ENCODE measurements at regions of chr9 and their contacts with region 1.

Region 1: GRCh38 chr9:89549031-89549644 is 51.2 kb upstream of the SEMA4D start:
- DNase-seq: peak; percentile 85
- H3K4me3 Mint-ChIP-seq: no peak overlapping the region
- H3K27ac Mint-ChIP-seq: no peak overlapping the region
- H3K4me1 Mint-ChIP-seq: peaks cover 21% of the 10 kb centered on the region
- H3K27me3 Mint-ChIP-seq: peaks cover 24% of the 10 kb centered on the region

Region 2: GRCh38 chr9:89379508-89380115 is 169.5 kb before region 1 on chr9:
- CTCF ChIA-PET with region 1: interaction called, 11 read pairs
- POLR2A ChIA-PET with region 1: interaction called, 6 read pairs
- DNase-seq: no peak
- H3K4me3 Mint-ChIP-seq: no peak overlapping the region
- H3K27ac Mint-ChIP-seq: peak overlapping the region; percentile 29
- H3K4me1 Mint-ChIP-seq: peaks cover 68% of the 10 kb centered on the region
- H3K27me3 Mint-ChIP-seq: no peaks in the 10 kb centered on the region

Region 3: GRCh38 chr9:89428901-89429890 is 119.9 kb before region 1 on chr9:
- CTCF ChIA-PET with region 1: interaction called, 69 read pairs
- POLR2A ChIA-PET with region 1: interaction called, 14 read pairs
- DNase-seq: peak; percentile 63
- H3K4me3 Mint-ChIP-seq: no peak overlapping the region
- H3K27ac Mint-ChIP-seq: peak overlapping the region; percentile 97
- H3K4me1 Mint-ChIP-seq: peaks cover 89% of the 10 kb centered on the region
- H3K27me3 Mint-ChIP-seq: no peaks in the 10 kb centered on the region

Region 4: DNA sequence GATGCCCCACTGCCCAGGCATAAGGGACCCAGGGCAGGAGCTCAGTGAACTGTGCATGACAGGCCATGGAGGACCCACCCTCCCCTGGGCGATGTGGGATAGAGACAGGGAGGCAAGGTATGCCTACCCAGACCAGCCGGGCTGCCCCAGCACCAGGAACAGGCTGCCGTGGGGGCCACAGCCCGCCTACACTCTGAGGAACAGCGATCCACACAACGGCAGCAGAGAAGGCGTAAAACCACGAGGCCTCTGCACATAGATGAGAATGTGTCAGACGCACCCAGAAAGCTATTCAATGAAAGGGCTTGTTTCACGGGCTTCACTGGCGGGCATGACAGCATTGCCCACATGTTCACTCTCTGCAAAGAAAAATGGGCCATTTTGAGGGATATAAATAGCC is 100.8 kb before region 1 on chr9:
- CTCF ChIA-PET with region 1: interaction called, 27 read pairs
- POLR2A ChIA-PET with region 1: interaction called, 8 read pairs
- DNase-seq: no peak
- H3K4me3 Mint-ChIP-seq: no peak overlapping the region
- H3K27ac Mint-ChIP-seq: peak overlapping the region; percentile 62
- H3K4me1 Mint-ChIP-seq: peaks cover 90% of the 10 kb centered on the region
- H3K27me3 Mint-ChIP-seq: no peaks in the 10 kb centered on the region

Region 5: DNA sequence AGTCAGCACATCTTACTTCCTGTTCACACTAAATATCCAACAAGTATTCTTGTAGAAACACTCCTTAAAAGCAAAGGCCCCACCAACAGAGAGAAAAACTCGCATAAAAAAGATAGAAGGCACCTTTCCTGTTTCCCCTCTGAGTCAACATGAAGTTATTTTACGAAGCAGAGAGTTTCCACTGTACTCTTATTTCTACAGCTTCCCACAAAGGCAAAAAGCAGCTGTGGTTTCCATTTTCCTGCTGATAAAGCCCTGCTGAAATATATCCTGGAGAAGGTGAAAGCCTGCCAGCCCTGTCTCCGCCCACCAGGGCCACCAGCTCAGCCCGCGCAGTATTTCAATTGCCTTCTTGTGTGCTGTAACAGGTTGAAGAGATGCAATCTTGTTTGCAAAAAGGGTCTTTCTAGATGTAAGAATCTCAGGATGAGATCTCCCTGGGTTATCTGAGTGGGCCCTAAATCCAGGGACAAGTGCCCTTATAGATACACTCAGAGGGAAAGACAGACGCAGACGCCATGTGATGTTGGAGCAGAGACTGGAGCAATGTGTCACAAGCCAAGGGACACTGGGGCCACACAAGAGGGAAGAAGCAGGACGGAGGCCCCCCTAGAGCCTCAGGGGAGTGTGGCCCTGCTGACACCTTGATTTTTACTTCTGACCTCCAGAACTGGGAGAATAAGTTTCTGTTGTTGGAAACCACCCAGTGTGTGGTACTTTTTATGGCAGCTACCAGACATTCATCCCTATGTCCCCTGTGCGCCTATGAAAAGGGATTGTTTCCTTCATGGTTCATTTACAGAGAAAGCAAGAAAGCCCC is 71.1 kb before region 1 on chr9:
- CTCF ChIA-PET with region 1: interaction called, 31 read pairs
- POLR2A ChIA-PET with region 1: interaction called, 10 read pairs
- DNase-seq: peak; percentile 66
- H3K4me3 Mint-ChIP-seq: peak overlapping the region; percentile 60
- H3K27ac Mint-ChIP-seq: peak overlapping the region; percentile 87
- H3K4me1 Mint-ChIP-seq: peaks cover 88% of the 10 kb centered on the region
- H3K27me3 Mint-ChIP-seq: no peaks in the 10 kb centered on the region

Region 6: DNA sequence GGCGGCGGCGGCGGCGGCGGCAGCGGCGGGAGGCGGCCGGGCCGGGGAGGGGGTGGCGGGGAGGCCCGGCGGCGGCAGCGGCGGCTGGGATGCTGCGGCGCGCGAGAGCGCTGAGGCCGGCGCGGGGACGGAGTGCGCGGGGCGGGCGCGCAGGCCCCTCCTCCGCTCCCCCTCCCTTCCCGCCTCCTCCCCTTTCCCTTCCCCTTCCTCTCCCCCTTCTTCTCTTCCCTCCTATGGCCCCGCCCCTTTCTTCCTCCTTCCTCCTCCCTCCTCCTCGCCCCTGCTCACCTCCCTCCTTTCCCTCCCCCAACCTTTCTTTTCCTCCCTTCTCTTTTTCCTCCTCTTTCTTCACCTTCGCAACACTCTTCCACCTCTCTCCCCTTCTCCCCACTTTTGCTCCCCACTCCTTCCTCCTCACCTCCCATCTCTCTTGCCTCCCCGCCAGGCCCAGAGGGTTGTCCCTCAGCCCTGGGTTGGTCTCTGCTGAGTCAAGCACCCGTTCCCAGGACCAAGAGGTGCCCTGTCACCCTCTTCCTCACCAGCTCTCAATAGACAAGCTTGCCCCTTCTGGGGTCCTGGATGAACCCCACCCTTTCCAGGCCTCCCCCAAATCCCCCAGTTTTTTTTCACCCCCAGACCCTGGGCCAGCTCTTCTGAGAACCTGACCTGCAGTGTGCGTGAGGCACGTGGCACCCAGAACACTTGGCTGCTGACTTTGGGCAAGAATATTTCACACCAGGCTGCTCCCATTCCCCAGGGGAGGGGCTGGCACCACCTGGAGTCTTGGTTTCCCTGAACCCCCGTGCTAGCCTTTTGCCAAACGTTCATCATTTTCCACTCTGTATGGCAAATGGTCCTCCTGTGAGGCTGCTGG is 50.9 kb before region 1 on chr9 and contains the start of gene SEMA4D:
- CTCF ChIA-PET with region 1: interaction called, 33 read pairs
- POLR2A ChIA-PET with region 1: interaction called, 17 read pairs
- DNase-seq: peak; percentile 73
- H3K4me3 Mint-ChIP-seq: peak within 1 kb of the TSS; percentile 95
- H3K27ac Mint-ChIP-seq: peak within 1 kb of the TSS; percentile 96
- H3K4me1 Mint-ChIP-seq: peaks cover 83% of the 10 kb centered on the region
- H3K27me3 Mint-ChIP-seq: no peaks in the 10 kb centered on the region
- total RNA-seq, gene SEMA4D: 339 to 350 TPM

Region 7: DNA sequence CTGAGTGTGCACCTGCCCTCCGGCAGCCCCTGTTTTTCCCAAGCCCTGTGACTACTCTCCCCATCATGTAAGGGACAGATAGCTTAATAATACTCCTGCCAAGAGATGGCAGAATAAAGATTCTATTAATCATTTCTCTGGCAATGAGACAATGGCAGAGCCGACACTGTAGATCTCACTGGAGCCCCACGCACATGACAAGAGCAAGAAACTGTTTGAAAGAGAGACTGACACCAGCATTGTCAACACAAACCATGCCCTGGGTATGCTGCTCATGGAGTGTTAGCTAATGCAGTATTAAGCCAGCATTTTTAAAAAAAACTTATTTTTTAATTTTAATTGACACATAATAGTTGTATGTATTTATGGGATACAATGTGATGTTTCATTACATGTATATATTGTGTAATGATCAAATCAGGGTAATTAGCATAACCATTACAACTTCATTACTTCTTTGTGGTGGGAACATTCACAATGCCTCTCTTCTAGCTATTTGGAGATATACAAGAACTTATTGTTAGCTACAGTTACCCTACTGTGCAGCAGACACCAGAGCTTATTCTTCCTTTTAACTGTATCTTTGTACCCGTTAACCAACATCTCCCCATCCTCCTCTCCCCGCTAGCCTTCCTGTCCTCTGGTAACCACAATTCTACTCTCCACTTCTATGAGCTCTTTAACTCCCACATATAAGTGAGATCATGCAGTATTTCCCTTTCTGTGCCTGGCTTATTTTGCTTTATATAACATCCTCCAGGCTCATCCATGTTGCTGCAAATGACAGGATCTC is 19.7 kb before region 1 on chr9:
- CTCF ChIA-PET with region 1: interaction called, 43 read pairs
- POLR2A ChIA-PET with region 1: interaction called, 23 read pairs
- DNase-seq: no peak
- H3K4me3 Mint-ChIP-seq: no peak overlapping the region
- H3K27ac Mint-ChIP-seq: peak overlapping the region; percentile 22
- H3K4me1 Mint-ChIP-seq: peaks cover 94% of the 10 kb centered on the region
- H3K27me3 Mint-ChIP-seq: no peaks in the 10 kb centered on the region

Measured in activated CD4-positive, alpha-beta memory T cell treated with anti-CD3 and anti-CD28 coated beads, Interleukin-2, amount 10 ng/mL, durations not matched to agents 7 days and 5 days (primary cell).